Activated CD8-positive, alpha-beta T cell treated with anti-CD3 and anti-CD28 coated beads, Interleukin-2, amount 10 ng/mL, durations not matched to agents 7 days and 5 days (primary cell): ENCODE measurements at regions of chr12 and their contacts with region 1.

Region 1: DNA sequence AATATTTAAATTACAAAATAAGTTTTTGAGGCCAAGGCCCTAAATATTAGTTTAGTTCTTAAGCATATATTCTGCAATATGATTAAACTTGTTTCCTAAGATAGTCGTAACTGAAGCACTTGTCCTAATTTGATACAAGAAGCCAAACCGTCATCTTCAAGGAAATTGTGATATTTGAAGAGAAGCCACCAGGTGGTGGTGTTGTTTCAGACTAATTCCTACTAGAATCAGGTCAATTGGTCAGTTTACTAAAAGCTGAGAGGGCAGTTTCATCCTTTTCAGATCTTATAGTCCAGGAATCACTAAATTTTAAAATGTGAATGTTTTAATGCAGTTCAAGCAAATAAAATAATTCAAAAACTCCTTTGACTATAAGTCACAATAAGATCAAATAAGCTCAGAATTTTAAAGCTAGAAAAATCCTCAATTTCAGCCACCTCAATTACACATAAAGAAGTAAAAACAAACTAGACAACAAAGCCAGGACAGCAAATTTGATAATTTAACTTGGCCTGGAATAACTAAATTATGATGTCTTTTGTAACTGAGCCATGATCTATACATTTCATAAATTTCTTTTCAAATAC is 7.1 kb upstream of the ARL1 start:
- DNase-seq: peak; percentile 49
- ATAC-seq: no peak
- H3K4me3 Mint-ChIP-seq: no peak overlapping the region
- H3K27ac Mint-ChIP-seq: no peak overlapping the region
- H3K4me1 Mint-ChIP-seq: no peaks in the 10 kb centered on the region
- H3K27me3 Mint-ChIP-seq: peaks cover 21% of the 10 kb centered on the region

Region 2: GRCh38 chr12:101480849-101481248 is 66.2 kb after region 1 on chr12:
- CTCF ChIA-PET with region 1: no interaction called
- POLR2A ChIA-PET with region 1: no interaction called
- DNase-seq: no peak
- ATAC-seq: no peak
- H3K4me3 Mint-ChIP-seq: no peak overlapping the region
- H3K27ac Mint-ChIP-seq: no peak overlapping the region
- H3K4me1 Mint-ChIP-seq: no peaks in the 10 kb centered on the region
- H3K27me3 Mint-ChIP-seq: peaks cover 3% of the 10 kb centered on the region

Region 3: GRCh38 chr12:101491329-101491728 is 76.7 kb after region 1 on chr12:
- CTCF ChIA-PET with region 1: no interaction called
- POLR2A ChIA-PET with region 1: no interaction called
- DNase-seq: no peak
- ATAC-seq: no peak
- H3K4me3 Mint-ChIP-seq: no peak overlapping the region
- H3K27ac Mint-ChIP-seq: no peak overlapping the region
- H3K4me1 Mint-ChIP-seq: no peaks in the 10 kb centered on the region
- H3K27me3 Mint-ChIP-seq: peaks cover 8% of the 10 kb centered on the region

Region 4: DNA sequence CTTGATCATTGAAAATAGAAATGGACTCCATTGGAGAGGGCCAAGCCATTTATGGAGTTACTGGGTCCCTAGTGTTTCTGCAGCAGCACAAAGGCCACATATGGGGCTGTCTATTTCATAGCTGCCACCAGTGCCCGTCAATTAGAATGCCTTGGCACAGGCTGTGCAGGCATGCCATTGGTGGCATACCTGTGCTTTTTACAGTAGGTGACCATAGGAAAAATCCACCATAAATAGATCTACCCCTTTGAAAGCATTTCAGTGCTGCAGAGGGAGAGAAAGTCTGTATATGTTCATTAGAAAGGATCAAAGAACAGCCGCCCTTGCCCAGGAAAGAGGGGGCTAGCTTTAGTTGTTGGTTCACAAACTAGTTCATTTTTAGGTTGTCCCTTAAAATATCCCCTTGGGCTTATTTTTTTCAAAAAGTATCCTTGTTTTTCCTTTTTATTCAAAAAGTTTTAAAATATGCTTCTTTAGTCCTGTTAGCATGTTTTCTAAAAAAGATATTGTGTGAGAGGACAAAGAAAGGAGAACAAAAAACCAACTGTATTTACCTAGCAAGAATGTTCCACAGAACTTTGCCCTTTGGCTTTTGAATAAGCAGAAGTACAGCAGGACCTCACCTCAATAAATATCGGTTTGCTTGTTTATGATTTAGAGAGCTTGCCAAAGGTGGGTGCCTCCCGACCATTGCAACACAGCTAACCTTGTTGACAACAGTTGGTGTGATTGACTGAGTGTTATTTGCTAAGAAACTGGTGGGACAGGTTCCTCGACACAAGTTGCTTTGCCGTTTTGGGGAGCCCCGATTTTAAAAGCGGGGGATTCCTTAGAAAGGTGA is 193.5 kb after region 1 on chr12:
- CTCF ChIA-PET with region 1: no interaction called
- POLR2A ChIA-PET with region 1: no interaction called
- DNase-seq: no peak
- ATAC-seq: no peak
- H3K4me3 Mint-ChIP-seq: no peak overlapping the region
- H3K27ac Mint-ChIP-seq: no peak overlapping the region
- H3K4me1 Mint-ChIP-seq: no peaks in the 10 kb centered on the region
- H3K27me3 Mint-ChIP-seq: peaks cover 4% of the 10 kb centered on the region

Region 5: GRCh38 chr12:101759396-101760047 is 344.9 kb after region 1 on chr12:
- CTCF ChIA-PET with region 1: interaction called, 12 read pairs
- POLR2A ChIA-PET with region 1: no interaction called
- DNase-seq: no peak
- ATAC-seq: no peak
- H3K4me3 Mint-ChIP-seq: no peak overlapping the region
- H3K27ac Mint-ChIP-seq: no peak overlapping the region
- H3K4me1 Mint-ChIP-seq: no peaks in the 10 kb centered on the region
- H3K27me3 Mint-ChIP-seq: no peaks in the 10 kb centered on the region